PC-3 (cell line): ENCODE measurements at regions of chr10 and their contacts with region 1.

Region 1: DNA sequence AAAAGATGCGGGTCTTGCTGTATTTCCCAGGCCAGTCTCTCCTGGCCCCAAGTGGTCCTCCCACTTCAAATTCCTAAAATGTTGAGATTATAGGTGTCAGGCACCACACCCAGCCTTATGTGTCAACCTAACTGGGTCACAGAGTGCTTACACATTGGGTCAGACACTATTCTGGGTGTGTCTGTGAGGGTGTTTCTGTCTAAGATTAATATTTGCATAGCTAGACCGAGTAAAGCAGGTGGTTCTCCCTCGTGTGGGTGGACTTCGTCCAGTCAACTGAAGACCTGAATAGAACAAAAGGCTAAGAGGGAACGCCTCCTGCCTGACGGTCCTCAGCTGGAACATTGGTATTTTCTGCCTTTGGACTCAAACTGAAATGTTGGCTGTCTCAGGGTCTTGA is 11.5 kb downstream of the PPIF start:
- DNase-seq: peak; percentile 71
- ATAC-seq: peak; percentile 62
- H3K4me3 ChIP-seq: no peak overlapping the region
- H3K27ac ChIP-seq: no peak overlapping the region
- H3K4me1 ChIP-seq: no peaks in the 10 kb centered on the region
- H3K27me3 ChIP-seq: no peaks in the 10 kb centered on the region
- CTCF ChIP-seq: no peak

Region 2: DNA sequence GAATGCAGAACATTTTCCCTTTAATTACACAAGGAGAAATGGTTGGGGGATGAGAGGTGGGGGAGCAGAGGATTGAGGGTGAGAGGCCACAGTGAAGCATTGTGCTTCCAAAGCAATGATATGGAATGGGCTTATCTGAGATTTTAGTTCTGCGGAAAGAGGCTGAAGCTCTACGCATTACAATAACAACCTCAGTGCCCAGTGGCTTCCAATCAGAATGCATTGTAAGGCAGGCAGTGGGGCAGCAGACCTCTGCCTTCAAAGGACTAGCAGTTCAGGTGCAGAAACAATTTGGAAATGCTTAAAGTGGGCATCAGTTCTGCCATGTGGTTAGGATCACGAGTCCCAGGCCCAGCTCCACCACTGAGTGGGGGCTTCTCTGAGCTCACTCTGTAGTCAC is 541.0 kb before region 1 on chr10:
- CTCF ChIA-PET with region 1: no interaction called
- POLR2A ChIA-PET with region 1: interaction called, 28 read pairs
- intact Hi-C with region 1: no loop called
- DNase-seq: no peak
- ATAC-seq: no peak
- H3K4me3 ChIP-seq: no peak overlapping the region
- H3K27ac ChIP-seq: no peak overlapping the region
- H3K4me1 ChIP-seq: 0 out of 2 replicates have a peak, but pooled peaks cover 5% of the 10 kb centered on the region
- H3K27me3 ChIP-seq: no peaks in the 10 kb centered on the region
- CTCF ChIP-seq: no peak